ENCODE measurements at regions of chr10 and their contacts with region 1.

Region 1: GRCh38 chr10:102140184-102140583 is 7.3 kb downstream of the PPRC1 start:
- DNase-seq: no peak
- ATAC-seq: no peak; the same call in 2 of the 3 replicates
- H3K4me3 ChIP-seq: no peak overlapping the region
- H3K27ac ChIP-seq: no peak overlapping the region
- H3K4me1 ChIP-seq: no peaks in the 10 kb centered on the region
- H3K27me3 ChIP-seq: no peaks in the 10 kb centered on the region
- CTCF ChIP-seq: no peak
- EP300 ChIP-seq: no peak
- POLR2A ChIP-seq: peak; percentile 40; the same call in 1 of the 2 replicates
- RAD21 ChIP-seq: no peak

Region 2: DNA sequence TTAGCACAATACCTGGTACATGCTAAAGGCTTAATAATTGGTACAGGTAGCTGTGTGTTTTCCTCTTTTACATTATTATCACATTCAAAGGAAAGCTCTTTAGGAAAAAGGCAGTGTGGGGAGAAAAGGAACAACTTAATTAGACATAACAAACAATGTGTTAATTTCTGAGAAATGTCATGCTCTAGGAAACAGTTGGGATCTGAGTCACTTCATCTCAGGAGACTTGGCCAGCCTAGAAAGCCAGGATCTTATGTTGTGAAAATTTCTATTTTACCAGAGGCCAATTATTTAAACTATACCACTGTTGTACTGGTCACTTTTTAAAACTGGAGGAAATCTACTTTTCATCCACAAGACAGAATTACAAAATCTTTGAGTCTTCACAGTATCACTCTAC is 123.8 kb before region 1 on chr10:
- CTCF ChIA-PET with region 1: no interaction called
- POLR2A ChIA-PET with region 1: no interaction called
- RAD21 ChIA-PET with region 1: no interaction called
- SMC1A ChIA-PET with region 1: no interaction called
- in situ Hi-C with region 1: no loop called
- intact Hi-C with region 1: no loop called
- DNase-seq: no peak
- ATAC-seq: no peak
- H3K4me3 ChIP-seq: no peak overlapping the region
- H3K27ac ChIP-seq: no peak overlapping the region
- H3K4me1 ChIP-seq: no peaks in the 10 kb centered on the region
- H3K27me3 ChIP-seq: no peaks in the 10 kb centered on the region
- CTCF ChIP-seq: no peak
- EP300 ChIP-seq: no peak
- POLR2A ChIP-seq: no peak
- RAD21 ChIP-seq: no peak

Region 3: DNA sequence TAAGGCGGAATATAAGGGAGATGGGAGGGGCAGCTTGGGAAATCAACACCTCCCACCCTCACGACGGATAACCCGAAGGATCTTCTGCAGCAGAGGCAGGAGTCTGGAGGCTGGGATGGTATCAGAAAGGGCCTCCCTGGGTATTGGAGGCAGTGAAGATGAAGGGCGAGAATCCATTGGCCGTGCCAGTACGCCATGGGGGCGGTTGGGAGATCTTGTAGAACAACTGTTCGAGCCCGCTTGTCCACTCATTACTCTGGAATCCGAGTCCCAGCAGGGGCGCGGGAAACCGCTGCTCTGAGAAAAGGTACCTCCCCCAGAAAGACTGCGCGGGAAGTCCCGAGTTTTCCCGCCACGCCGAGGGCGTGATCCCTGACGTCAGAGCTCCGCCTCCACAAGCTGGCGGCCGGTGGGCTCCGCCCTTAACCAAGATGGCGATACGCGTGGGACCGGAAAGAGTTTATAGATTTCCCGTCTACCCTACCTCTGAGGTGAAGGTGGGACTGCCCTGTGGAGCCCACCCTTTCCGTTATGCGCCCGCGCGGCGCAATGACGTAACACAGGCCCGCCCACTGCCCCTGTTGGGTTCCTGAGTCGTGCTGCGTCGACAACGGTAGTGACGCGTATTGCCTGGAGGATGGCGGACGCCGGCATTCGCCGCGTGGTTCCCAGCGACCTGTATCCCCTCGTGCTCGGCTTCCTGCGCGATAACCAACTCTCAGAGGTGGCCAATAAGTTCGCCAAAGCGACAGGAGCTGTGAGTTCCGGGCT is 11.8 kb after region 1 on chr10 and contains the start of gene NOLC1:
- CTCF ChIA-PET with region 1: interaction called, 9 read pairs
- POLR2A ChIA-PET with region 1: interaction called, 11 read pairs
- RAD21 ChIA-PET with region 1: interaction called, 12 read pairs
- SMC1A ChIA-PET with region 1: interaction called, 29 read pairs
- in situ Hi-C with region 1: no loop called
- intact Hi-C with region 1: no loop called
- DNase-seq: peak; percentile 98
- ATAC-seq: peak; percentile 96
- H3K4me3 ChIP-seq: peak within 1 kb of the TSS; percentile 94
- H3K27ac ChIP-seq: peak within 1 kb of the TSS; percentile 83
- H3K4me1 ChIP-seq: peaks cover 9% of the 10 kb centered on the region
- H3K27me3 ChIP-seq: no peaks in the 10 kb centered on the region
- CTCF ChIP-seq: no peak
- EP300 ChIP-seq: peak; percentile 48 to 57; a peak in 1 of 4 replicates
- POLR2A ChIP-seq: peak; percentile 99
- RAD21 ChIP-seq: no peak
- polyA plus RNA-seq, gene NOLC1: 91.7 to 103 TPM